Activated naive CD4-positive, alpha-beta T cell treated with anti-CD3 and anti-CD28 coated beads, Interleukin-2, amount 10 ng/mL, durations not matched to agents 7 days and 5 days (primary cell): ENCODE measurements at regions of chr14 and their contacts with region 1.

Region 1: DNA sequence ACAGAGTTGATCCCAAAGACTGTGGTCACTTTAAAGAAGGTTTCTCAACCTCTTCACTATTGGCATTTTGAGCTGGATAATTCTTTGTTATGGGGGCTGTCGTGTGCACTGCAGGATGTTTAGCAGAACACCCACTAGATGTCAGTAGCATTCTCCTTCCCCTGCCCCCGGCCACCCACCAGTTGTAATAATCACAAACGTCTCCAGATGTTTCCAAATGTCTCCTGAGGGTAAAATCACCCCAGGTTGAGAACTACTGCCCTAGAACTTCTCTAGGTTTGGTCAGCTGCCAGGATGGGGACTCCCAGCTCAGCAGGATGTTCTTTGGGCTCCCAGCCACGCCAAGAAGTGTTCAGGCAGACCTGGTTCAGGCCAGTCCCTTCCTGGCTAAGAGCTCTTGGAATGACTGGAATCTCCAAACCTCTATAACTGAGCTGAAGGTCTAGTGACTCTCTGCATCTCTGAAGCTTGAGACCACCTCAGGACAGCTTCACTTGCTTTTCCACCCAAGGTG is 12.5 kb upstream of the AJUBA start:
- DNase-seq: peak; percentile 48
- H3K4me3 Mint-ChIP-seq: no peak overlapping the region
- H3K27ac Mint-ChIP-seq: no peak overlapping the region
- H3K4me1 Mint-ChIP-seq: no peaks in the 10 kb centered on the region
- H3K27me3 Mint-ChIP-seq: no peaks in the 10 kb centered on the region

Region 2: GRCh38 chr14:22945642-22946041 is 49.2 kb before region 1 on chr14:
- CTCF ChIA-PET with region 1: no interaction called
- DNase-seq: no peak
- H3K4me3 Mint-ChIP-seq: no peak overlapping the region
- H3K27ac Mint-ChIP-seq: no peak overlapping the region
- H3K4me1 Mint-ChIP-seq: no peaks in the 10 kb centered on the region
- H3K27me3 Mint-ChIP-seq: no peaks in the 10 kb centered on the region

Region 3: DNA sequence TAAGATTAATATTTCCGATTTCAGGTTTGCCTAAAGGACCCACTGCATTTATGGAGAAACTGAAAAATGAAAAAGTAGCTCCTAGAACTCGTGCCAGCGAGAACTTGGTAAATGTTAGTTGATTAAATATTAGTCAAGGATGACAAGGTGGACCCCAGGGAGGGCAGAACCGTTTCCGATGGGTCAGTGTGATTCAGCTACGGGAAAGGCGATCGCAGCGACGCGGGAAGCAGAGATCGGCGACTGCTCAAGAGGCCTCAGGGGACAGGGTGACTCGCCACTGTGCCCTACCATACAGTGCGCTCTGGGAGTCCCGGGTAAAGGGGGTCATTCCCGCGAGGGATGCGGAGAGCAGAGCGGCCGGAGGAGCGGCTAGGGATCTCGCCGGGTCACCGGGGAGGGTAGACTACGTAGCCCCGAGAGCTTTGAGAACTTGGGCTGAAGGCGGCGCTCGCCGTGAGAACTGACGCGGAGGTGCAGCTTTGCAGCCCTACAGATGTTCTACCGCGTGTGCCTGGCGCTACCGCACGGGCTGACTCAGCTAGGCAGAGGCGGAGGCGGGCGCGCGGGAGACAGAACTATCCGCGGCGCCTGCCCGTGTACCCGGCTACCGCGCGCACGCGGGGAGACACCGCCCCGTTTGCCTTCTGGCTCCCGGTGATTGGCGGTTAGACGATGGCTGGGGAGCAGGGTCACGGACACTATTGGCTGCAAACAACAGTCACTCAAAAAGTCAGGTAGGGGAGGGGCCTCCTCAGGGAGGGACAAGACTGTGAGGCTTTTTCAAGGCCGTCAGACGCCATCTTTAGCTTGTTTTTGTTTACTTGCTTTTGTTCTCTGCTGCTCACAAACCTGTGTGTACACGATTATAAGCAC is 12.0 kb after region 1 on chr14:
- CTCF ChIA-PET with region 1: interaction called, 32 read pairs
- DNase-seq: peak; percentile 98
- H3K4me3 Mint-ChIP-seq: peak overlapping the region; percentile 96
- H3K27ac Mint-ChIP-seq: peak overlapping the region; percentile 98
- H3K4me1 Mint-ChIP-seq: peaks cover 53% of the 10 kb centered on the region
- H3K27me3 Mint-ChIP-seq: no peaks in the 10 kb centered on the region

Region 4: GRCh38 chr14:23025151-23025814 is 30.5 kb after region 1 on chr14:
- CTCF ChIA-PET with region 1: interaction called, 10 read pairs
- DNase-seq: no peak
- H3K4me3 Mint-ChIP-seq: no peak overlapping the region
- H3K27ac Mint-ChIP-seq: peak overlapping the region; percentile 56
- H3K4me1 Mint-ChIP-seq: peaks cover 67% of the 10 kb centered on the region
- H3K27me3 Mint-ChIP-seq: no peaks in the 10 kb centered on the region